ENCODE measurements at regions of chr6 and their contacts with region 1.

Region 1: GRCh38 chr6:84967389-84967788 is 203.0 kb upstream of the TBX18 start:
- DNase-seq: peak; percentile 52
- ATAC-seq: peak; percentile 86
- H3K4me3 ChIP-seq: no peak overlapping the region
- H3K27ac ChIP-seq: no peak overlapping the region
- H3K4me1 ChIP-seq: no peaks in the 10 kb centered on the region
- H3K27me3 ChIP-seq: peaks cover 0 to 3% of the 10 kb centered on the region in 2 experiments; a peak in 1 of 5 replicates
- CTCF ChIP-seq: peak; percentile 77
- EP300 ChIP-seq: no peak
- POLR2A ChIP-seq: no peak
- RAD21 ChIP-seq: peak; percentile 57

Region 2: GRCh38 chr6:83884523-83884922 is 1082.9 kb before region 1 on chr6:
- CTCF ChIA-PET with region 1: interaction called, 6 read pairs
- POLR2A ChIA-PET with region 1: no interaction called
- in situ Hi-C with region 1: no loop called
- intact Hi-C with region 1: loop called (anchors 5 kb)
- DNase-seq: peak; percentile 27
- ATAC-seq: peak; percentile 55; the same call in 2 of the 3 replicates
- H3K4me3 ChIP-seq: no peak overlapping the region
- H3K27ac ChIP-seq: no peak overlapping the region
- H3K4me1 ChIP-seq: peaks cover 4% of the 10 kb centered on the region
- H3K27me3 ChIP-seq: no peaks in the 10 kb centered on the region
- CTCF ChIP-seq: peak; percentile 82
- EP300 ChIP-seq: no peak
- POLR2A ChIP-seq: no peak
- RAD21 ChIP-seq: peak; percentile 64

Region 3: GRCh38 chr6:84428300-84428907 is 539.0 kb before region 1 on chr6:
- CTCF ChIA-PET with region 1: no interaction called
- POLR2A ChIA-PET with region 1: no interaction called
- in situ Hi-C with region 1: loop called (anchors 10 kb)
- intact Hi-C with region 1: loop called (anchors 1 kb)
- DNase-seq: peak; percentile 16
- ATAC-seq: peak; percentile 72
- H3K4me3 ChIP-seq: no peak overlapping the region
- H3K27ac ChIP-seq: no peak overlapping the region
- H3K4me1 ChIP-seq: no peaks in the 10 kb centered on the region
- H3K27me3 ChIP-seq: no peaks in the 10 kb centered on the region; a peak in 1 of 5 replicates
- CTCF ChIP-seq: peak; percentile 70
- EP300 ChIP-seq: no peak
- POLR2A ChIP-seq: no peak
- RAD21 ChIP-seq: peak; percentile 36; the same call in 1 of the 2 replicates

Region 4: DNA sequence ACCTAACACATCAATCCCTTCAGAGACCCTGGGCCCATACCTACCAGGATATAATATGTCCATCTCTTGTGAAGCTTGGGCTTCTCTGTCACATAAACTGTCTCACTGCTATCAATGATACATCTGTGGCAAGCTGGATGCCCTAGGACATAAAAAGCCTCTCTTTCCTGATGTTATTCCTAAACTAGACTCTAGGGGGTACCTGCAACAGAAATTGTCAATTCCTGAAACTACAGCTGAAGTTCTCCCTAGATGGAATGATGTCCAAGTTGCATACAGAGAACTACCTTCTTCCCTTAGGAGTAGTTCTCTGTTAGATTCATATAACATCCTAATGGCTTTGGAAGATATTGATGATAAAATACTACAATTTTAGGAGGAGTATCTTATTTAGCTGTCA is 238.8 kb before region 1 on chr6:
- CTCF ChIA-PET with region 1: no interaction called
- POLR2A ChIA-PET with region 1: no interaction called
- in situ Hi-C with region 1: no loop called
- intact Hi-C with region 1: loop called (anchors 1 kb)
- DNase-seq: peak; percentile 5
- ATAC-seq: peak; percentile 69
- H3K4me3 ChIP-seq: no peak overlapping the region
- H3K27ac ChIP-seq: no peak overlapping the region
- H3K4me1 ChIP-seq: no peaks in the 10 kb centered on the region
- H3K27me3 ChIP-seq: no peaks in the 10 kb centered on the region
- CTCF ChIP-seq: peak; percentile 34
- EP300 ChIP-seq: no peak
- POLR2A ChIP-seq: no peak
- RAD21 ChIP-seq: no peak